Heart right ventricle (tissue), 16 donors: ENCODE measurements at regions of chr6 and their contacts with region 1.

Region 1: GRCh38 chr6:164106345-164106769 is 691.8 kb downstream of the QKI start:
- DNase-seq: peak; percentile 70 to 79
- ATAC-seq: peak; percentile 26 to 70 (median 58)
- H3K4me3 ChIP-seq: peak overlapping the region in 8 of 10 donors; percentile 10 to 36 (median 30)
- H3K27ac ChIP-seq: peak overlapping the region; percentile 80 to 97 (median 90)
- H3K4me1 ChIP-seq: peaks cover 3 to 74% (median 37%) of the 10 kb centered on the region in 9 donors
- H3K27me3 ChIP-seq: no peaks in the 10 kb centered on the region
- CTCF ChIP-seq: peak; percentile 43 to 73 (median 67)

Region 2: DNA sequence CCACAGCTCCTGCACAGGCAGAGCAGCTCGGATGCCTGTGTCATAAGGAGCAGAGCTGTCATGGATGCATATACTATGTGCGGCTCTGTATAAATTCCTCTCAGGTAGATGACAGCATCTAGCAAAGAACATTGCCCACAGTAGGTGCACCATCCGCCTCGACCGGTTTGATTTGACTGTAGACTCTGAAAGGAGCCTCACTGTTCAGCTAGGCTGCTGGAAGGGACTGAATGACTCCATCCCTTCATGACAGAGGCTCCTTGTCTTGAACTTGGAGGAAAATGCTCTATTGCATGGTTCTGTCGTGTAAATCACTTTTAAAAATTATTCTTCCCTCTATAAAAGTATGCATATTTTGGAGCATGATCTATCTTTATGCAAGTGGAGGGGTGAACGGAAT is 820.7 kb before region 1 on chr6:
- intact Hi-C with region 1: loop called in 1 of 10 experiments (anchors 5 kb)
- DNase-seq: no peak
- ATAC-seq: no peak
- H3K4me3 ChIP-seq: no peak overlapping the region
- H3K27ac ChIP-seq: peak overlapping the region in 2 of 10 donors; percentile 30 to 41
- H3K4me1 ChIP-seq: peaks cover 0 to 24% (median 5%) of the 10 kb centered on the region in 9 donors
- H3K27me3 ChIP-seq: no peaks in the 10 kb centered on the region
- CTCF ChIP-seq: no peak

Region 3: DNA sequence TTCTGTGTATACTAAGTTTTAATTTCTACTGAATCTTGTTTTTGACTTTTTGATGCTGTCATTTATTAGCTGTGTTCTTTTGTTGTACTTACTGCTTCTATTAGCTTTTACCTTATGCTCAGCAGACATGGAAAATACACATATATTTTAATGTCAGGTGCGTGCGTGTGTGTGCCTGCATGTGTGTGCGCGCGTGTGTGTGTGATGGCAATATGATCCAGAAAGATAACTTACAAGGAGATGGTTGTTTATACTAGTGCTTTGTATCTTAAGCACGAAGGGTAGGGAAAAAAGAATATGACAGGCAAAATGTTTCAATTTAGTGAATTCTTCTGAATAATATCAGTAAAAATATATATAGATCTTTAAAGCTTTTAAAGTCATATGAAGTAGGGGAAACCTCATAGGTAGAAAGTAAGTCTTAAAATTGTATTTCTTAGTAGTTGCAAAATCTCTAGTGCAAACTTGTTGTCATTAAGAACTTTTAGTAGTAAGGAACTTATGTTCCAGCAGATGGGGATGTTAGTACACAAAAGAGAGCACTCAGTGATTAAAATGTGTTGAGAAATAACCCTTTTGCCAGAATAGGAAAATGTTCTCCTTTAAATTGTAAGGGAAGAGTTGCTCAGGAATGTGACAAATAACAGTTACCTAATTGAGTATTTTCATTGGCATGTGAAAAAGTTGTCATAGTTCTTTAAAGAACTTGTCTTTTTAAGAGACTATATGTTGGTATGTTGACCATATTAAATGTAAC is 678.7 kb before region 1 on chr6:
- intact Hi-C with region 1: loop called in 3 of 10 experiments (anchors 5 to 10 kb)
- DNase-seq: no peak
- ATAC-seq: peak in 5 of 8 donors; percentile 38 to 54 (median 41)
- H3K4me3 ChIP-seq: peak overlapping the region in 2 of 10 donors; percentile 9 to 12
- H3K27ac ChIP-seq: peak overlapping the region in 5 of 10 donors; percentile 1 to 36 (median 8)
- H3K4me1 ChIP-seq: peaks cover 3 to 100% (median 99%) of the 10 kb centered on the region in 9 donors
- H3K27me3 ChIP-seq: no peaks in the 10 kb centered on the region
- CTCF ChIP-seq: peak; percentile 9 to 65 (median 44)

Region 4: GRCh38 chr6:163585932-163586437 is 520.4 kb before region 1 on chr6:
- intact Hi-C with region 1: loop called in 2 of 10 experiments (anchors 5 kb)
- DNase-seq: peak; percentile 49 to 68
- ATAC-seq: peak; percentile 65 to 90 (median 79)
- H3K4me3 ChIP-seq: peak overlapping the region in 2 of 10 donors; percentile 1 to 8
- H3K27ac ChIP-seq: peak overlapping the region in 8 of 10 donors; percentile 27 to 63 (median 47)
- H3K4me1 ChIP-seq: peaks cover 4 to 58% (median 28%) of the 10 kb centered on the region in 9 donors
- H3K27me3 ChIP-seq: no peaks in the 10 kb centered on the region
- CTCF ChIP-seq: no peak

Region 5: DNA sequence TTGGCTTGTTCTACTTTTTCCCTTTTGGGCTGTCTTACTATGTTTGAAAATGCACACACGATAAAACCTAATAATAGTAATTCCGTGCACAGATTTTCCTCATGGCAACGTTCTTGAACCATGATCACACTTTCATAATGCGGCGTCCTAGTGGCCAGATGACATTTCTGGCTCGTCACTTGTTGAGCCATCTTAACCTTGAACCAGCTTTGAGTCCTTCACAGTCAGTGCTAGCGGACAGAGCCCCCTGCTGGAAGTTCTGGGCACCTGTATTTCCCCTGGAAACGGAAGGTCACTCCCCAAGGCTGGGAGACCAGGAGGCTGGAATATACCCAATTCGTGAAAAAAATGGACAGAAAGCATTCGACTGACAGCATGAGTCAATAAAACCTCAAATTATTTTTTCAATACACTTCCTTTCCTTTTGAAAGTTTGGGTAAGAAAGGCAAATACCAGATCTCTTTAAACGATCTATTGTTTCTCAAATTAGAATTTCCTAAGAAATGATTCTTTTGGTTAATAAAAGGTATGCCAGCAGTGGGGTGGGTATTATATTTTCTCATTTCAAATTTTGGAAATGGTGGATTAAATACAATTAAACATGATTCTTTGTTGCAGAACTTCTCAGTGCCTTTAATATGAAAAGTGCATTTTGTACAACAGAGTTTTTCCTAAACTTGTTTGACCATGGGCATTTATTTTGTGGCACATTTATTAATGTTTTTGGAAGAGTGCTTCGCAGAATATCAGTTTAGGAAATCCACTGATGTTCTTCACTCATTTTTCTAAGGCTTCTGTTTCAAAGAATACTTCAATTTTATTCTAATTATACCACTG is 149.6 kb before region 1 on chr6:
- intact Hi-C with region 1: loop called in 5 of 10 experiments (anchors 2 to 10 kb)
- DNase-seq: peak; percentile 79 to 90
- ATAC-seq: peak; percentile 82 to 93 (median 91)
- H3K4me3 ChIP-seq: peak overlapping the region in 1 of 10 donors; percentile 2
- H3K27ac ChIP-seq: peak overlapping the region in 7 of 10 donors; percentile 7 to 94 (median 56)
- H3K4me1 ChIP-seq: peaks cover 0 to 51% (median 27%) of the 10 kb centered on the region in 9 donors
- H3K27me3 ChIP-seq: peaks cover 0 to 4% (median 0%) of the 10 kb centered on the region in 7 donors
- CTCF ChIP-seq: peak; percentile 90 to 98 (median 95)

Region 6: GRCh38 chr6:164927288-164928056 is 821.1 kb after region 1 on chr6:
- intact Hi-C with region 1: loop called in 4 of 10 experiments (anchors 5 to 10 kb)
- DNase-seq: peak; percentile 48 to 74
- ATAC-seq: peak; percentile 83 to 96 (median 92)
- H3K4me3 ChIP-seq: peak overlapping the region in 3 of 10 donors; percentile 10 to 18 (median 14)
- H3K27ac ChIP-seq: no peak overlapping the region
- H3K4me1 ChIP-seq: peaks cover 0 to 13% (median 7%) of the 10 kb centered on the region in 9 donors
- H3K27me3 ChIP-seq: no peaks in the 10 kb centered on the region
- CTCF ChIP-seq: peak; percentile 94 to 100 (median 97)